ENCODE measurements at regions of chr1 and their contacts with region 1.

Region 1: GRCh38 chr1:154955718-154956543 is at the start of gene PBXIP1:
- DNase-seq: peak; percentile 97
- H3K4me3 Mint-ChIP-seq: peak within 1 kb of the TSS; percentile 88
- H3K27ac Mint-ChIP-seq: peak within 1 kb of the TSS; percentile 68
- H3K4me1 Mint-ChIP-seq: peaks cover 43% of the 10 kb centered on the region
- H3K27me3 Mint-ChIP-seq: no peaks in the 10 kb centered on the region
- CTCF ChIP-seq: peak; percentile 24
- total RNA-seq, gene PBXIP1: 11.3 TPM in 2 replicates

Region 2: DNA sequence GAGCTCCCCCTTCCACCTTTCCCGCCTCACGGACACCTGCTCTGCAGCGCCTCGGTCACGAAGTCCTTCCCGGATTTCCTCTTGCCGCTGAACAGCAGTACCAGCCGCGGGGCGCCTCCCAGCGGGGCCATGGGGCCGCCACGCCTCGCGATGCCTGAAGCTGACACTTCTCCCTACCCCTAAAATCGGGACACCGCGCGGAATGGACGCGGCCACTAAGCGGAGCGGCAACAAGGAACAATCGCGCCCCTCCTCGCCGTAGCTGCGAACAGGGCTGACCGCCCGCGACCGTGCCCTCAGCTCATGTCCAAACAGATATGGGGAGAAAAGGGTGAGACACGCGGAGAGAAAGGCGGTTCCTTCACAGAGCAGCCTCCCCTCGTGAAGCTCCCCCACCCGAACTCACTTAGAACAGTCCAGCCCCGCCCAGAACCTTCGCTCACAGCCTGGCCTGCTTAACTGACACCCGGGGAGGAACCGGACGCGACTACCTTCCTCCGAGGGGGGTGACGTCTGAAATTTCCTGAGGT is 19.3 kb before region 1 on chr1 and contains the start of gene PMVK:
- CTCF ChIA-PET with region 1: interaction called, 45 read pairs
- POLR2A ChIA-PET with region 1: interaction called, 114 read pairs
- intact Hi-C with region 1: no loop called
- DNase-seq: peak; percentile 99
- H3K4me3 Mint-ChIP-seq: peak within 1 kb of the TSS; percentile 90
- H3K27ac Mint-ChIP-seq: peak within 1 kb of the TSS; percentile 100
- H3K4me1 Mint-ChIP-seq: peaks cover 49% of the 10 kb centered on the region
- H3K27me3 Mint-ChIP-seq: no peaks in the 10 kb centered on the region
- CTCF ChIP-seq: peak; percentile 26
- total RNA-seq, gene PMVK: 57.7 and 68.9 TPM in 2 replicates

Region 3: GRCh38 chr1:154982897-154983648 is 27.1 kb after region 1 on chr1 and contains the start of gene FLAD1:
- CTCF ChIA-PET with region 1: interaction called, 13 read pairs
- POLR2A ChIA-PET with region 1: interaction called, 1,917 read pairs
- intact Hi-C with region 1: no loop called
- DNase-seq: peak; percentile 100
- H3K4me3 Mint-ChIP-seq: no peak within 1 kb of the TSS
- H3K27ac Mint-ChIP-seq: no peak within 1 kb of the TSS
- H3K4me1 Mint-ChIP-seq: peaks cover 6% of the 10 kb centered on the region
- H3K27me3 Mint-ChIP-seq: no peaks in the 10 kb centered on the region
- CTCF ChIP-seq: no peak
- total RNA-seq, gene FLAD1: 65.4 and 91.1 TPM in 2 replicates

Region 4: GRCh38 chr1:154992721-154993571 is 37.0 kb after region 1 on chr1:
- CTCF ChIA-PET with region 1: interaction called, 22 read pairs
- POLR2A ChIA-PET with region 1: interaction called, 1,917 read pairs
- intact Hi-C with region 1: no loop called
- DNase-seq: no peak
- H3K4me3 Mint-ChIP-seq: no peak overlapping the region
- H3K27ac Mint-ChIP-seq: peak overlapping the region; percentile 50
- H3K4me1 Mint-ChIP-seq: peaks cover 32% of the 10 kb centered on the region
- H3K27me3 Mint-ChIP-seq: no peaks in the 10 kb centered on the region
- CTCF ChIP-seq: no peak

Region 5: GRCh38 chr1:155044812-155045690 is 89.1 kb after region 1 on chr1:
- CTCF ChIA-PET with region 1: interaction called, 12 read pairs
- POLR2A ChIA-PET with region 1: interaction called, 12 read pairs
- intact Hi-C with region 1: no loop called
- DNase-seq: peak; percentile 90
- H3K4me3 Mint-ChIP-seq: no peak overlapping the region
- H3K27ac Mint-ChIP-seq: no peak overlapping the region
- H3K4me1 Mint-ChIP-seq: peaks cover 37% of the 10 kb centered on the region
- H3K27me3 Mint-ChIP-seq: no peaks in the 10 kb centered on the region
- CTCF ChIP-seq: peak; percentile 83

Region 6: GRCh38 chr1:155063550-155064110 is 107.7 kb after region 1 on chr1 and contains the start of gene EFNA4:
- CTCF ChIA-PET with region 1: interaction called, 29 read pairs
- POLR2A ChIA-PET with region 1: interaction called, 6 read pairs
- intact Hi-C with region 1: no loop called
- DNase-seq: peak; percentile 96
- H3K4me3 Mint-ChIP-seq: peak within 1 kb of the TSS; percentile 81
- H3K27ac Mint-ChIP-seq: peak within 1 kb of the TSS; percentile 3
- H3K4me1 Mint-ChIP-seq: peaks cover 31% of the 10 kb centered on the region
- H3K27me3 Mint-ChIP-seq: no peaks in the 10 kb centered on the region
- CTCF ChIP-seq: no peak
- total RNA-seq, gene EFNA4: 7.4 and 9.5 TPM in 2 replicates